Thyroid gland (tissue), 4 donors: ENCODE measurements at regions of chr12 and their contacts with region 1.

Region 1: GRCh38 chr12:84091651-84092050 is 820.9 kb downstream of the SLC6A15 start:
- DNase-seq: no peak
- H3K4me3 ChIP-seq: no peak overlapping the region
- H3K27ac ChIP-seq: no peak overlapping the region
- H3K4me1 ChIP-seq: no peaks in the 10 kb centered on the region
- H3K27me3 ChIP-seq: no peaks in the 10 kb centered on the region
- CTCF ChIP-seq: no peak
- POLR2A ChIP-seq: no peak

Region 2: DNA sequence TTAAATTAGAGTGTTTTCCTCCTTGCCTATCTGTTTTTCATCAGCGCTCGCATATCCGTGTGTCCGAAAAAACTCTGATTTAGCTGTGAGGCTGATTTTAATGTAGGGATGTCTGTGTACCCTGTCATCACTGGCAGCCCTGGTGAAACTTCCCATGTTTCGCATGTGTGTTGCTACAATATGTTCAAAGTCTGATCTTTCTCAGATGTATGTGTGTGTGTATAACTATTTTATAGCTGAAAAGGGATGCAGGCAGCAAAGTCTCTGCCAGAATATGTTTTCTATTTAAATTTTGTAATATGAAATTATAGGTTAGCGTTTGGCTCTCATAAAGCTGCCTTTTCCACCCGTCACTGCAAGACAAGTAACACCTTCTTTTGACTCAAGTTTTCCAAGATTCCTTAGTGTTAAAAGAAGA is 1250.2 kb before region 1 on chr12:
- intact Hi-C with region 1: loop called (anchors 5 kb)
- DNase-seq: no peak
- H3K4me3 ChIP-seq: no peak overlapping the region
- H3K27ac ChIP-seq: no peak overlapping the region
- H3K4me1 ChIP-seq: no peaks in the 10 kb centered on the region
- H3K27me3 ChIP-seq: no peaks in the 10 kb centered on the region
- CTCF ChIP-seq: no peak
- POLR2A ChIP-seq: no peak